Dorsolateral prefrontal cortex (tissue), 120 donors: ENCODE measurements at regions of chr3 and their contacts with region 1.

Region 1: GRCh38 chr3:197501879-197502620 is 53.7 kb downstream of the BDH1 start:
- DNase-seq: peak in 8 of 10 donors; percentile 50 to 76 (median 63)
- H3K4me3 ChIP-seq: no peak overlapping the region
- H3K27ac ChIP-seq: peak overlapping the region in 27 of 59 donors; percentile 0 to 98 (median 37)
- H3K27me3 ChIP-seq: no peaks in the 10 kb centered on the region
- CTCF ChIP-seq: peak in 54 of 56 donors; percentile 47 to 79 (median 64)

Region 2: DNA sequence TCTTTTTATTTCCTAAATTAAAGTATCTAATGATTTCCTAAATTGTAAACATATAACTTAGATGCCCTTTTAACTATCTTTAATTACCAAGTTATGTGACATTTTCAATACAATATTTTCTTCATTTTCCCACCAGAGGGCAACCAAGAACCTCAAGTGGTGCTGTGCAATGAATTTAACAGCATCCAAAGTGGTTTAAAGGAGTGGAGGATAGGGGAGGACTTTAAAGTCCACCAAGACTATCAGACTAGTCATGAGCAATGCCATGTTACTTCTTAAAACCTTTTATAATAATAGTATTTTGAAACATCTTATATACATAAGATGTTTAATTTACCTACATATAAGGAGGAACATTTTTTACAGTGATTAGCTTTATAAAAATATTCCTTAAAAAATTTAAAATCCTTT is 278.0 kb before region 1 on chr3:
- intact Hi-C with region 1: loop called in 1 of 2 experiments (anchors 10 kb)
- DNase-seq: no peak
- H3K4me3 ChIP-seq: peak overlapping the region in 1 of 59 donors; percentile 17
- H3K27ac ChIP-seq: peak overlapping the region in 16 of 59 donors; percentile 3 to 62 (median 22)
- H3K27me3 ChIP-seq: no peaks in the 10 kb centered on the region
- CTCF ChIP-seq: peak; percentile 49 to 89 (median 72)

Region 3: GRCh38 chr3:197372047-197372666 is 129.9 kb before region 1 on chr3:
- intact Hi-C with region 1: loop called (anchors 10 kb)
- DNase-seq: peak in 2 of 10 donors; percentile 23 to 25
- H3K4me3 ChIP-seq: no peak overlapping the region
- H3K27ac ChIP-seq: peak overlapping the region in 43 of 59 donors; percentile 3 to 99 (median 92)
- H3K27me3 ChIP-seq: no peaks in the 10 kb centered on the region
- CTCF ChIP-seq: no peak

Region 4: GRCh38 chr3:197833930-197834715 is 332.1 kb after region 1 on chr3:
- intact Hi-C with region 1: no loop called
- DNase-seq: no peak
- H3K4me3 ChIP-seq: no peak overlapping the region
- H3K27ac ChIP-seq: no peak overlapping the region
- H3K27me3 ChIP-seq: no peaks in the 10 kb centered on the region
- CTCF ChIP-seq: no peak